Activated T-helper 1 cell treated with anti-CD3 and anti-CD28 coated beads, Interleukin-12 subunit alpha, Interleukin-12 subunit beta, Interleukin-2, Interleukin-4 antibody, amounts not matched to agents 30 ng/mL and 10 ng/mL and 1 ng/mL, durations not matched to agents 14 hours and 24 hours and 36 hours (primary cell): ENCODE measurements at regions of chr7 and their contacts with region 1.

Region 1: DNA sequence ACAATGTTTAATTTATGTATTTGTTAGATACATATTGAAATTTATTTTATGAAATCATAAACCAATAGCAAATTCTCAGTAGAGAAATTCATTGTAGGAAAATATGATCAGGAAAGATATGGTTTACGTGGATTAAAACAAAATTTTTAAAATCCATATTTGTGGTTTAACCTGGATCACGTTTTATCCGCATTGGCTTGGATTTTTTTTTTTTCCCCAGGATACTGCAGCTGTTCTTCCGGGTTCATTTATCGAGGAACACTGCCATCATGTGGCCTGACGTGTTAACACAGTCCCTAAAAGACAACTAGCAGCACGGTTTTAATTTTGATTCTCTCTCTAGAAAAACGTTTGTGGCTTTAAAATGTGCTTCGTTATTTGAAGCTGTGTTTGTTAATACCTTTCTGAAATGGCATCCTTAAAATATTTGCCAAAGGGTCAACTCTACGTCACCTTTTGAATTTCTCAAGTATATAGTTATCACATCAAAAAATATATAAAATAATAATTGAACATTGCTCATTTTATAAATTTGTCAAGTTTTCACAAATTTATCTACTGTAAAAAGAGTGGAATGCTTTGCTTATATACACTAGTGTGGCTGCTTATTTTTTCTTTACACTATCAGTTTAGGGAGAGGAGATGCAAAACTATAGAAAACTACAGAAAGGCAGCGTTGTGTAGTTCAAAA is 8.7 kb upstream of the ASB4 start:
- DNase-seq: peak; percentile 20
- H3K4me3 Mint-ChIP-seq: no peak overlapping the region
- H3K27ac Mint-ChIP-seq: no peak overlapping the region
- H3K4me1 Mint-ChIP-seq: no peaks in the 10 kb centered on the region
- H3K27me3 Mint-ChIP-seq: peaks cover 5% of the 10 kb centered on the region

Region 2: DNA sequence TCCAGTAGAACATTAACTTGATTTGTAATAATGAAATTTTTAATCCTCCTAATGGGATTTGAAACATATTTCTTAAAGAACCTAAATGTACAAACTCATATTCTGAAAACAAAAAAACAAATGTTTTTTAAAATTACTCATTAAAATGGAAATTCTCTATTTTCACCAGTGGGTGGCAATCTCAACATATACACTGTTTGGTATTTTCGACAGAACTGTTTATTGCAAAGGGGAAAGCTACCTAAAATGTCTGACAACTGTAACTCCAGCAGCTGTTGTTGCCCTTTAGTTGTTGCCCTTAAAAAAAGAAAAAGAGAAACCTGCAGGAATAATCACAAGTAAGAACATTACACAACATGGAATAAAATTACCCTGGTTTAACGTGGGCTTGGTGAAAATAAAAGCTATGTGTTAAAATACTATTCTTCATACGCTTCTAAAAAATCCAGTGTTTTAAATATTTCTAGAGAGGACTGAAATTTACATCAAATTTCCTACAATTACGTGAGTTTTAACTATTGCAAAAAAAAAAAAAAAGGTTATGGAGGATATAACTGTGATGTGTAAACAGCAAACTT is 1027.8 kb before region 1 on chr7:
- intact Hi-C with region 1: loop called (anchors 1 kb)
- DNase-seq: no peak
- H3K4me3 Mint-ChIP-seq: no peak overlapping the region
- H3K27ac Mint-ChIP-seq: no peak overlapping the region
- H3K4me1 Mint-ChIP-seq: no peaks in the 10 kb centered on the region
- H3K27me3 Mint-ChIP-seq: peaks cover 6% of the 10 kb centered on the region

Region 3: GRCh38 chr7:94509879-94510581 is 967.0 kb before region 1 on chr7:
- intact Hi-C with region 1: loop called (anchors 10 kb)
- DNase-seq: peak; percentile 60
- H3K4me3 Mint-ChIP-seq: peak overlapping the region; percentile 86
- H3K27ac Mint-ChIP-seq: peak overlapping the region; percentile 88
- H3K4me1 Mint-ChIP-seq: peaks cover 30% of the 10 kb centered on the region
- H3K27me3 Mint-ChIP-seq: no peaks in the 10 kb centered on the region

Region 4: DNA sequence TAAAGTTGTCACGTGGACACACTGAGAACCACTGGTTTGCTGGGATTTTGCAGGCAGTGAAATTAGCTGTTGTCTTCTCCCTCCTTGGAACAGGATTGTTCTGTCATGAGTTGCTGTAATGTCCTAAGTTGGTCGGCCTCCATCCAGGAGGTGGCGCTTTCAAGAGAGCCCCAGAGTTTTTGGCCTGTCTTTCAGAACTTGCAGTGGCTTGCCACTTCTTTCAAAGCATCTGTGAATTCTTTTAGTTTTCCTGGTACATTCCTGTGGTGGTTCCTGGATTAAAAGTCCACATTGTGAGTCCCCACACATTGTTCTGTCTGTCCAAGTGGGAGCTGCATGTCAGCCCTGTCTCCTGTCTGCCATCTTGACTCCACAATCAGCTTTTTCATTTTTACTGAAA is 286.5 kb before region 1 on chr7:
- intact Hi-C with region 1: loop called (anchors 1 kb)
- DNase-seq: no peak
- H3K4me3 Mint-ChIP-seq: no peak overlapping the region
- H3K27ac Mint-ChIP-seq: no peak overlapping the region
- H3K4me1 Mint-ChIP-seq: no peaks in the 10 kb centered on the region
- H3K27me3 Mint-ChIP-seq: no peaks in the 10 kb centered on the region

Region 5: GRCh38 chr7:95246831-95247370 is 230.1 kb before region 1 on chr7:
- intact Hi-C with region 1: loop called (anchors 10 kb)
- DNase-seq: no peak
- H3K4me3 Mint-ChIP-seq: no peak overlapping the region
- H3K27ac Mint-ChIP-seq: no peak overlapping the region
- H3K4me1 Mint-ChIP-seq: no peaks in the 10 kb centered on the region
- H3K27me3 Mint-ChIP-seq: no peaks in the 10 kb centered on the region

Region 6: GRCh38 chr7:95396136-95397032 is 80.7 kb before region 1 on chr7 and contains the start of gene PON3:
- intact Hi-C with region 1: loop called (anchors 2 kb)
- DNase-seq: no peak
- H3K4me3 Mint-ChIP-seq: peak within 1 kb of the TSS; percentile 57
- H3K27ac Mint-ChIP-seq: no peak within 1 kb of the TSS
- H3K4me1 Mint-ChIP-seq: peaks cover 4% of the 10 kb centered on the region
- H3K27me3 Mint-ChIP-seq: peaks cover 28% of the 10 kb centered on the region
- total RNA-seq, gene PON3: not detected in 2 replicates

Region 7: GRCh38 chr7:95501261-95501832 is 24.3 kb after region 1 on chr7:
- intact Hi-C with region 1: loop called (anchors 2 kb)
- DNase-seq: peak; percentile 22
- H3K4me3 Mint-ChIP-seq: peak overlapping the region; percentile 20
- H3K27ac Mint-ChIP-seq: peak overlapping the region; percentile 79
- H3K4me1 Mint-ChIP-seq: peaks cover 45% of the 10 kb centered on the region
- H3K27me3 Mint-ChIP-seq: peaks cover 4% of the 10 kb centered on the region